ENCODE measurements at regions of chr7 and their contacts with region 1.

Region 1: GRCh38 chr7:138886501-138886917 is 88.5 kb upstream of the ATP6V0A4 start:
- DNase-seq: peak; percentile 53 to 78 (median 75)
- H3K4me3 ChIP-seq: no peak overlapping the region
- H3K4me3 Mint-ChIP-seq: peak overlapping the region in 4 of 8 donors; percentile 19 to 77 (median 54)
- H3K27ac ChIP-seq: no peak overlapping the region
- H3K27ac Mint-ChIP-seq: peak overlapping the region in 5 of 7 donors; percentile 65 to 92 (median 86)
- H3K4me1 ChIP-seq: no peaks in the 10 kb centered on the region
- H3K4me1 Mint-ChIP-seq: peaks cover 12 to 17% (median 15%) of the 10 kb centered on the region in 4 donors
- H3K27me3 ChIP-seq: no peaks in the 10 kb centered on the region
- H3K27me3 Mint-ChIP-seq: no peaks in the 10 kb centered on the region

Region 2: DNA sequence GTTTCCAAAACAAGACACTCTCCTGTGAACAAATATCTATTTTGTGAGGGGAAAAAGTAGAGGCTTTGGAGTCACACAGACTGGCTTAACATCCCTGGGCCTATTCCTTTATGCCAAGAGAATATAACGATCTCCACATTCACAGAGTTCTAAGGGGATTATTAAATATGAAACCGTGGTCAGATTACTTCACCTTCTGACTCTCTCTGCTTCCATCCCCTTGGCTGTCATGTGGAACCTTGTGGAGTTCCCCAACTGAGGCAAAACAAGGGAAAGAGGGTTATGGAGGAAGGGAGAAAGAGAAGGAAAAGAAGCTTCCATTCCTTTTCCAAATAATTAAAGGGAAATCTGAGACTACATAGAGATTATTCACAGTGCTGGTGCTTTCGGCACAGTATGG is 33.1 kb before region 1 on chr7:
- CTCF ChIA-PET with region 1: interaction called, 3 read pairs
- POLR2A ChIA-PET with region 1: no interaction called
- intact Hi-C with region 1: loop called (anchors 1 kb)
- DNase-seq: no peak
- H3K4me3 ChIP-seq: no peak overlapping the region
- H3K4me3 Mint-ChIP-seq: no peak overlapping the region
- H3K27ac ChIP-seq: no peak overlapping the region
- H3K27ac Mint-ChIP-seq: no peak overlapping the region
- H3K4me1 ChIP-seq: no peaks in the 10 kb centered on the region
- H3K4me1 Mint-ChIP-seq: no peaks in the 10 kb centered on the region
- H3K27me3 ChIP-seq: no peaks in the 10 kb centered on the region
- H3K27me3 Mint-ChIP-seq: peaks cover 4% of the 10 kb centered on the region in 2 donors

Region 3: DNA sequence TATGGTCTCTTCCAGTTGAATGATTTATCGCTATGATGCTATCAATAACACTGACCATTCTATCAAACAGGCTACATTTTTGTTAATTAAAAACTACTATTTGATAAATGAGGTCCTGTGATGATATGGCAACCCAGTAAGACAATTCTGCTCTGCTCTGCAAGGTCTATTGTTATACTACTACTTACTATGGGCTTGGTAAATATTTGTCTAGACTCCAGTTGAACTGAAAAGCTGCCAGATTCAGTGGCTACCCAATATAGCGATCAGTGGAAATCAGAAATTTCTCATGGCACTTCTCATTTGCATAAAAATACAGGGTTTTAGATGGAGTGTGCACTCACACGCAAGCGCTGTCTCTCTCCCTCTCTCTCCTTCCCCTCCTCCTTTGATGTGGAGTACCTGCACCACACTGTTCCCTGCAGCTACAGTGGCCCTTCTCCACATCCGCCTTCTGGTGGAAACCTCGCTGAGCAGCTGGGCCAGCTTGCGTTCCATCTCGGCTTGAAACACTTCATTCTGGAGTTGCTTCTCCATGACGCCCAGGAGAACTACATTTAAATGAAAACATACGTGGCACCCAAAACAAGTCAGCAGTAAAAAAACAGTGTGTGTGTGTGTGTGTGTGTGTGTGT is 16.8 kb after region 1 on chr7:
- CTCF ChIA-PET with region 1: interaction called, 34 read pairs
- POLR2A ChIA-PET with region 1: interaction called, 16 read pairs
- intact Hi-C with region 1: loop called (anchors 1 kb)
- DNase-seq: peak; percentile 86 to 91 (median 89)
- H3K4me3 ChIP-seq: no peak overlapping the region
- H3K4me3 Mint-ChIP-seq: peak overlapping the region; percentile 77 to 94 (median 85)
- H3K27ac ChIP-seq: no peak overlapping the region
- H3K27ac Mint-ChIP-seq: peak overlapping the region; percentile 57 to 99 (median 91)
- H3K4me1 ChIP-seq: peaks cover 38% of the 10 kb centered on the region
- H3K4me1 Mint-ChIP-seq: peaks cover 24 to 52% (median 31%) of the 10 kb centered on the region in 4 donors
- H3K27me3 ChIP-seq: no peaks in the 10 kb centered on the region
- H3K27me3 Mint-ChIP-seq: peaks cover 6 to 11% of the 10 kb centered on the region in 2 donors

Region 4: GRCh38 chr7:139035586-139036353 is 149.3 kb after region 1 on chr7 and contains the start of gene ZC3HAV1L:
- CTCF ChIA-PET with region 1: interaction called, 6 read pairs
- POLR2A ChIA-PET with region 1: interaction called, 4 read pairs
- intact Hi-C with region 1: loop called (anchors 5 kb)
- DNase-seq: peak in 4 of 5 donors; percentile 35 to 48 (median 39)
- H3K4me3 ChIP-seq: peak within 1 kb of the TSS; percentile 14 to 51
- H3K4me3 Mint-ChIP-seq: peak within 1 kb of the TSS; percentile 74 to 88 (median 84)
- H3K27ac ChIP-seq: no peak within 1 kb of the TSS
- H3K27ac Mint-ChIP-seq: peak within 1 kb of the TSS in 3 of 7 donors; percentile 32 to 79 (median 57)
- H3K4me1 ChIP-seq: peaks cover 22% of the 10 kb centered on the region
- H3K4me1 Mint-ChIP-seq: peaks cover 12 to 33% (median 16%) of the 10 kb centered on the region in 4 donors
- H3K27me3 ChIP-seq: no peaks in the 10 kb centered on the region
- H3K27me3 Mint-ChIP-seq: no peaks in the 10 kb centered on the region
- total RNA-seq, gene ZC3HAV1L: 3.8 to 4.6 TPM

Region 5: GRCh38 chr7:139068544-139069399 is 182.3 kb after region 1 on chr7:
- CTCF ChIA-PET with region 1: interaction called, 10 read pairs
- POLR2A ChIA-PET with region 1: interaction called, 3 read pairs
- intact Hi-C with region 1: no loop called
- DNase-seq: no peak
- H3K4me3 ChIP-seq: no peak overlapping the region
- H3K4me3 Mint-ChIP-seq: peak overlapping the region in 1 of 8 donors; percentile 40
- H3K27ac ChIP-seq: no peak overlapping the region
- H3K27ac Mint-ChIP-seq: peak overlapping the region; percentile 47 to 93 (median 68)
- H3K4me1 ChIP-seq: peaks cover 43% of the 10 kb centered on the region
- H3K4me1 Mint-ChIP-seq: peaks cover 33 to 83% (median 56%) of the 10 kb centered on the region in 4 donors
- H3K27me3 ChIP-seq: no peaks in the 10 kb centered on the region
- H3K27me3 Mint-ChIP-seq: no peaks in the 10 kb centered on the region

Region 6: GRCh38 chr7:139133335-139134139 is 247.0 kb after region 1 on chr7:
- CTCF ChIA-PET with region 1: interaction called, 36 read pairs
- POLR2A ChIA-PET with region 1: interaction called, 9 read pairs
- intact Hi-C with region 1: no loop called
- DNase-seq: peak; percentile 86 to 89 (median 88)
- H3K4me3 ChIP-seq: peak overlapping the region; percentile 25 to 55
- H3K4me3 Mint-ChIP-seq: peak overlapping the region; percentile 87 to 97 (median 92)
- H3K27ac ChIP-seq: peak overlapping the region; percentile 56
- H3K27ac Mint-ChIP-seq: peak overlapping the region; percentile 73 to 97 (median 93)
- H3K4me1 ChIP-seq: peaks cover 14% of the 10 kb centered on the region
- H3K4me1 Mint-ChIP-seq: peaks cover 5 to 22% (median 17%) of the 10 kb centered on the region in 4 donors
- H3K27me3 ChIP-seq: no peaks in the 10 kb centered on the region
- H3K27me3 Mint-ChIP-seq: no peaks in the 10 kb centered on the region

Region 7: GRCh38 chr7:139271718-139272628 is 385.5 kb after region 1 on chr7:
- CTCF ChIA-PET with region 1: no interaction called
- POLR2A ChIA-PET with region 1: no interaction called
- intact Hi-C with region 1: no loop called
- DNase-seq: no peak
- H3K4me3 ChIP-seq: no peak overlapping the region
- H3K4me3 Mint-ChIP-seq: no peak overlapping the region
- H3K27ac ChIP-seq: no peak overlapping the region
- H3K27ac Mint-ChIP-seq: no peak overlapping the region
- H3K4me1 ChIP-seq: no peaks in the 10 kb centered on the region
- H3K4me1 Mint-ChIP-seq: no peaks in the 10 kb centered on the region
- H3K27me3 ChIP-seq: no peaks in the 10 kb centered on the region
- H3K27me3 Mint-ChIP-seq: no peaks in the 10 kb centered on the region

Measured in CD4-positive, alpha-beta memory T cell (primary cell).